ENCODE measurements at regions of chrX and their contacts with region 1.

Region 1: DNA sequence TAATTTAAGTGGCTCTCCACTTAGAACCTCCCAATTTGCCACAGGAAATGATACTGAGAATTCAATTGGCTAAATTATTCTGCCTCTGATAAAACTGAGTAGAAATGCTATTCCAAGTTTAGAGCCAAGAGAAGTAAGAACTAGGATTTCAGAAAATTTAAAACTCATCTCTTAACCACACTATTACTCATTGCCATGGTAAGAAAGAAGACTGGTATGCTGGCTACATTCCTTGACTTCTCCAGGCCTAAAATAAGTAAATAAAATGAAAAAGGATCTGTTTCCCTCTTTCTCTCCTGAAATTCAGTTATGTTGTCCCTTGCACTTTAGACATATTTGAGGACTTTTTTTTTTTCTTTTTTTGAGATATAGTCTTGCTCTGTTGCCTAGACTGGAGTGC is 23.3 kb downstream of the ZNF280C start:
- DNase-seq: no peak
- ATAC-seq: no peak
- H3K4me3 ChIP-seq: no peak overlapping the region
- H3K27ac ChIP-seq: no peak overlapping the region
- H3K4me1 ChIP-seq: no peaks in the 10 kb centered on the region
- H3K27me3 ChIP-seq: no peaks in the 10 kb centered on the region
- CTCF ChIP-seq: no peak
- POLR2A ChIP-seq: no peak
- RAD21 ChIP-seq: no peak

Region 2: GRCh38 chrX:130204647-130205046 is 40.8 kb before region 1 on chrX:
- CTCF ChIA-PET with region 1: no interaction called
- POLR2A ChIA-PET with region 1: no interaction called
- RAD21 ChIA-PET with region 1: no interaction called
- intact Hi-C with region 1: loop called (anchors 5 kb)
- DNase-seq: no peak
- ATAC-seq: no peak
- H3K4me3 ChIP-seq: no peak overlapping the region
- H3K27ac ChIP-seq: no peak overlapping the region
- H3K4me1 ChIP-seq: peaks cover 3 to 12% of the 10 kb centered on the region in 2 experiments; a peak in 3 of 4 replicates
- H3K27me3 ChIP-seq: no peaks in the 10 kb centered on the region
- CTCF ChIP-seq: no peak
- POLR2A ChIP-seq: no peak
- RAD21 ChIP-seq: no peak